ENCODE measurements at regions of chr9 and their contacts with region 1.

Region 1: DNA sequence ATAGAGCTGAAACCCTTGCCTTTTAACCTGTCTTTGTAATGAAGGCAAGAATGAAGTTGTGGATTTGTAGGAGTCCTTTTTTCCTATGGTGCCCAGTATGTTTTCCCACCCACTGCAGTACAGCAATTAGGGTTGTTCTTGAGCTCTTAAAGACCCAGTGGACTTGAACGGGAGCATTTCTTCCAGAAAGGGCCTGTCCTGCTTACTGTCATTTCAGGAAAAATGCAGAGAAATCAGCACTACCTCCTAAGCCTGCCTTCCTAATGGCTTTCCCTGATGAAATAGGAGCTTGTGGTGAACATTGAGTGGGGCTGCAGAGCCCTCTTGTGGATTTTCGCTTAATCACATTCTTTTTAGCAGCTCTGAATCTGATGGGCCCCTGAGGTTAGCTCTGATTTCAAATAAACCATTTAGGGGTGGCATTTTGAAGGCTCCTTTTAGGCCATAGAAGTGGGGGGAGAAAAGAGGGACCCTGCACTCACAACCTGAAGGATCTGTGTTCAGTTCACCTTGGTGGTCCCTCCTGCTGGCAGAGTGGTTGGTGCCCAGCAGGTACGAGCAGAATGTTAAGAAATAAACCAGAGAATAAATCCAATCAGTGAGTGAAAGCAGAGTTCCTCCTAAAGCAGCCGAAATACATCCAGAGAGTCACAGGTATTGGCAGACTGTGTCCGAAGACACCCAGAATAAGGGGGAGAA is 188.0 kb upstream of the KLF9 start:
- DNase-seq: peak in 1 of 2 donors; percentile 78
- H3K4me3 ChIP-seq: peak overlapping the region in 1 of 2 donors; percentile 18
- H3K27ac ChIP-seq: peak overlapping the region; percentile 87 to 88
- H3K4me1 ChIP-seq: peaks cover 0 to 21% of the 10 kb centered on the region in 2 donors
- H3K27me3 ChIP-seq: no peaks in the 10 kb centered on the region
- CTCF ChIP-seq: peak; percentile 70 to 84 (median 80)

Region 2: DNA sequence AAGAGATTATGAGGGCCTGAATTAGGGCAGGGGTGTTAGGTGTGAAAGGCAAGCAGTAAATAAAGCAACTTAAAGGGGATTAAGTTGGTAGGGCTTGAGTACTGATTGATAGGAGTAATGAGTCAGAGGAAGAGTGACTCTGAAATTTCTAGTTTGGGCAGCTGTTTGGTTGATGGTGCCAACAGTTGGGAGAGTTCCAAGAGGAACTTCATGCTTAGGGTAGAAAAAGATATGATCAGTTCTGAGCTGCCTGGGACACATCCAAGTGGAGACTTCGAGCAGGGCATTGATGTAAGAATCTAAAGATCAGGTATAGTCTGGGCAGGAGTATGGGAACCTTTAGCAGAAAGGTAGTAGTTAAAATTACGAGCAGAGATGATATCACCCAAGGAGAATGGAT is 548.6 kb before region 1 on chr9:
- intact Hi-C with region 1: loop called (anchors 5 kb)
- DNase-seq: peak in 1 of 2 donors; percentile 71
- H3K4me3 ChIP-seq: no peak overlapping the region
- H3K27ac ChIP-seq: peak overlapping the region; percentile 63 to 69
- H3K4me1 ChIP-seq: peaks cover 11 to 47% of the 10 kb centered on the region in 2 donors
- H3K27me3 ChIP-seq: no peaks in the 10 kb centered on the region
- CTCF ChIP-seq: no peak

Region 3: DNA sequence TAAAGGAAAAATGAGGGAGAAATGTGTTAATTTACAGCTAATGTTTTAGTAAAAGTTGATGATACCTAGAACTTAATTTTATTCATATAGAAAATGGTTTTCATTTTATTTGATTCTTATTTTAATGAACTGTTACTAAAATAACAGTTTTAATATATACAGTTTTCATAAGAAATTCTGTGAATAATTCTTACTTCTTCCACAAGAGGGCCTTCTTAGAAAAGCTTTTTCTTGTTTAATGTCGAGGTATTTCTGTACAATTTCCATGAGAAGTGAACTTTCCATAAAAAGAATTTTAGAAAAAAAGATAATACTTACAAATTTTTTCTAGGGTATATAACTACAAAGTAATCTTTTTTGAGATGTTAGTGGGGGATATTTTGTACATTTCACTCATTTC is 261.9 kb before region 1 on chr9:
- intact Hi-C with region 1: loop called (anchors 1 kb)
- DNase-seq: no peak
- H3K4me3 ChIP-seq: no peak overlapping the region
- H3K27ac ChIP-seq: no peak overlapping the region
- H3K4me1 ChIP-seq: peaks cover 0 to 2% of the 10 kb centered on the region in 2 donors
- H3K27me3 ChIP-seq: no peaks in the 10 kb centered on the region
- CTCF ChIP-seq: peak; percentile 51 to 61 (median 55)

Region 4: DNA sequence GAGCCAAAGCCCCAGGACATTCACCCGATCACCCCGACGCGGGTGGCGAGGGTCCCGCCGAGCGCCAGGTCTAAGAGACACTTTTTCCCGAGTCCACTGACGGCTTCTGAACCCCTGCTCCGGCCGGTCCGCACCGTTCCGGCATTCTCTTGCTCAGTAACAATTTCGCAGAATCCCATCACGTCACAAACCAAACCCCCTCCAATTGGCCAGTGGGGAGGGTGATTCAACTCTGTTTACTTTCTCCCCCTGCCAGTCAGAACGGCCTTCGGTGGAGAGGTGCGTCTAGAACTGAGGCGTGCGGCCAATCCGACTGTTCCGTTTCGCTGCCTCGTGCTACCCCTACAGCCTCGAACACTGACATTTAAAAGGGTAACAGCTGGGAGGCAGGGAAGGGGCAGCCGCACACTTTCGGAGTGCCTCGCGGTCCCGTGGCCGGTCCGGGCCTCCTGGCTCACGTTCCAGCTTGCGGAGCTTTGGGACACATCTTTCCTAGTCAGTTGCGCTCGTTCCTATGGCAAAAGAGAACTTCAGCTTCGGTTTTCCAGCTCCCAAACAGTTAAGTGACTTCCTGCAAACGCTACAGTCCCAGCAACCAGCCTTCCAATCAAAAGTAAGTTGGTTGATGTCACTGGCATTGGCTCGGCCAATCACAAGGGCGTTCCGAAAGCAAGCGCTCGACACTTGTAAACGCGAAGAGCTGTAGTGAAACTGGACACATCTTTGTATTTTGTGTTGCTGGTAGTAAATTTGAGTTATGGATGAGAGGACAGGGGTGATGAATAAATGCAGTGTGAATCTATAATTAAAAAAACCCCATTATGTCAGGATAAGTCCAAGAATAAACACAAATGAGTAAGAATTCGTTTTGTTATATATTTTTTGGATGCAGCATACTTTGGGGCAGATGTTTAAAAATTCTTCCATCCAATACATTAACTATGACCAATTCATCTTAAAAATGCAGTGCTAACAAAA is 188.4 kb before region 1 on chr9 and contains the start of gene KLF9:
- intact Hi-C with region 1: loop called (anchors 1 kb)
- DNase-seq: peak; percentile 95 to 98
- H3K4me3 ChIP-seq: peak within 1 kb of the TSS; percentile 92 to 94
- H3K27ac ChIP-seq: peak within 1 kb of the TSS; percentile 100
- H3K4me1 ChIP-seq: peaks cover 5 to 37% of the 10 kb centered on the region in 2 donors
- H3K27me3 ChIP-seq: no peaks in the 10 kb centered on the region
- CTCF ChIP-seq: no peak
- total RNA-seq, gene KLF9: 98.7 TPM

Region 5: GRCh38 chr9:70484210-70485130 is 118.0 kb before region 1 on chr9:
- intact Hi-C with region 1: loop called (anchors 1 kb)
- DNase-seq: no peak
- H3K4me3 ChIP-seq: no peak overlapping the region
- H3K27ac ChIP-seq: peak overlapping the region; percentile 40 to 62
- H3K4me1 ChIP-seq: peaks cover 22 to 41% of the 10 kb centered on the region in 2 donors
- H3K27me3 ChIP-seq: no peaks in the 10 kb centered on the region
- CTCF ChIP-seq: peak; percentile 67 to 73 (median 69)

Region 6: GRCh38 chr9:70574151-70574837 is 28.2 kb before region 1 on chr9:
- intact Hi-C with region 1: loop called (anchors 1 kb)
- DNase-seq: peak in 1 of 2 donors; percentile 87
- H3K4me3 ChIP-seq: no peak overlapping the region
- H3K27ac ChIP-seq: peak overlapping the region; percentile 68 to 71
- H3K4me1 ChIP-seq: peaks cover 3 to 11% of the 10 kb centered on the region in 2 donors
- H3K27me3 ChIP-seq: no peaks in the 10 kb centered on the region
- CTCF ChIP-seq: no peak

Region 7: GRCh38 chr9:70701163-70701562 is 98.7 kb after region 1 on chr9:
- intact Hi-C with region 1: no loop called
- DNase-seq: no peak
- H3K4me3 ChIP-seq: no peak overlapping the region
- H3K27ac ChIP-seq: no peak overlapping the region
- H3K4me1 ChIP-seq: no peaks in the 10 kb centered on the region
- H3K27me3 ChIP-seq: no peaks in the 10 kb centered on the region
- CTCF ChIP-seq: no peak

Measured in ascending aorta (tissue), 2 donors.